ENCODE measurements at regions of chr2 and their contacts with region 1.

Region 1: GRCh38 chr2:217657252-217657651 is 345.5 kb downstream of the TNS1 start:
- DNase-seq: no peak
- ATAC-seq: no peak
- H3K4me3 ChIP-seq: no peak overlapping the region
- H3K27ac ChIP-seq: no peak overlapping the region
- H3K4me1 ChIP-seq: peaks cover 0 to 4% of the 10 kb centered on the region in 2 donors
- H3K27me3 ChIP-seq: no peaks in the 10 kb centered on the region

Region 2: DNA sequence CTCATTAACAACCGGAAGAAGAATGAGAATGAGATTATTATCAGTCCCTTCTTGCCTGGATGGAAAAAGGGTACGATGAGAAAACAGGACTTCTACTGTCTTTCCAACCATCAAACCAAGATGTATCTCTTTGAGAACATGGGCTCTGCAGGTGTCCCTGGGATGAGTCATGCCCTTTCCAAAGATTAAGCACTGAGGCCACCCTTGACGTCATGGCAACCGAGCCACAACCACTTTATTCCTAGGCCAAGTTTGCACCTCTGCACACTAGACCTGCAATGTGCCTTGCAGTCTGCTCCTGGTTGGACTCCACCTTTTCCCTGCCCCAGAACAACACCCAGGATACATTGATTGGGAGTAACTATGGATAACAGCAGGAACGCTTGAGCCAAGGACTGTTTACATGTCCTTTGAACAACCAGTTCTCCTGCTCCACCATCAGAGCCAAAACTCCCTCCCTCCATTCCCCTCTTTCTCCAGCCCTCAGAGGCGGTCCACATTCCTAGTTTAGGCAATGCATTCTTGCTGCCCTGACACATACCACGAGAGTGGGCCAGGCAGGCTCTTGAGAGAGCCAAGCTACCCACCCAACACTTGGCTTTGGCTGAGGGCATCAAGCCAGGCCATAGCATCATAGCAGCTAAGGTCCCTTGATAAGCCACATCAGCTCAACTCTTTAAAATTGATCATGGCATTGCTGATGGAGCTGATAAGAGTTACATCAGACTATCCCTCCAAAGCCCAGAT is 34.8 kb after region 1 on chr2:
- intact Hi-C with region 1: loop called (anchors 5 kb)
- DNase-seq: peak; percentile 88 to 93
- ATAC-seq: peak; percentile 83
- H3K4me3 ChIP-seq: no peak overlapping the region
- H3K27ac ChIP-seq: peak overlapping the region; percentile 6 to 85
- H3K4me1 ChIP-seq: peaks cover 6 to 12% of the 10 kb centered on the region in 2 donors
- H3K27me3 ChIP-seq: no peaks in the 10 kb centered on the region

Measured in aorta (tissue), 5 donors.